ENCODE measurements at regions of chr10 and their contacts with region 1.

Region 1: DNA sequence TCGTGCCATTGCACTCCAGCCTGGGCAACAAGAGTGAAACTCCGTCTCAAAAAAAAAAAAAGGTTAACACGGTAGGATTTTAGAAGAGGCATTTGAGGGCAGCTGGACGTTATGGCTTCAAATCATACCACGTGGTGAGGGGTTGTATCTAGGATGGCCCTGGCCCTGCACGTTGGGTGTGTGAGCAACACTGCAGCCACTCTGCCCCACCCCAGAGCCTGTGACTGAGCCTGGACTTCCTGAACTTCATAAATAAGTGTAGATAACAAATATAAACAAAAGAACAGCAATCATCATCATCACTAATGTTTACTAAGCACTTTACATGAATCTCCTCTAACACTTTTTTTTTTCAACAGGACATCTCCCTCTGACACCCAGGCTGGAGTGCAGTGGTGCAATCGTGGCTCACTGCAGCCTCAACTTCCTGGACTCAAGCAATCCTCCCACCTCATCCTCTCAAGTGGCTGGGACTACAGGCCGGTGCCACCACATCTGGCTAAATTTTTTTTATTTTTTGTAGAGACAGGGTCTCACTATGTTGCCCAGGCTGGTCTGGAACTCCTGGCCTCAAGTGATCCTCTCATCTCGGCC is 169.5 kb upstream of the FRMD4A start:
- DNase-seq: no peak
- ATAC-seq: no peak
- H3K4me3 ChIP-seq: no peak overlapping the region
- H3K4me3 Mint-ChIP-seq: no peak overlapping the region
- H3K27ac ChIP-seq: no peak overlapping the region
- H3K27ac Mint-ChIP-seq: peak overlapping the region in 4 of 9 donors; percentile 28 to 56 (median 40)
- H3K4me1 ChIP-seq: no peaks in the 10 kb centered on the region
- H3K4me1 Mint-ChIP-seq: peaks cover 4 to 15% (median 6%) of the 10 kb centered on the region in 7 donors
- H3K27me3 ChIP-seq: no peaks in the 10 kb centered on the region
- H3K27me3 Mint-ChIP-seq: peaks cover 0 to 12% (median 0%) of the 10 kb centered on the region in 5 donors

Region 2: DNA sequence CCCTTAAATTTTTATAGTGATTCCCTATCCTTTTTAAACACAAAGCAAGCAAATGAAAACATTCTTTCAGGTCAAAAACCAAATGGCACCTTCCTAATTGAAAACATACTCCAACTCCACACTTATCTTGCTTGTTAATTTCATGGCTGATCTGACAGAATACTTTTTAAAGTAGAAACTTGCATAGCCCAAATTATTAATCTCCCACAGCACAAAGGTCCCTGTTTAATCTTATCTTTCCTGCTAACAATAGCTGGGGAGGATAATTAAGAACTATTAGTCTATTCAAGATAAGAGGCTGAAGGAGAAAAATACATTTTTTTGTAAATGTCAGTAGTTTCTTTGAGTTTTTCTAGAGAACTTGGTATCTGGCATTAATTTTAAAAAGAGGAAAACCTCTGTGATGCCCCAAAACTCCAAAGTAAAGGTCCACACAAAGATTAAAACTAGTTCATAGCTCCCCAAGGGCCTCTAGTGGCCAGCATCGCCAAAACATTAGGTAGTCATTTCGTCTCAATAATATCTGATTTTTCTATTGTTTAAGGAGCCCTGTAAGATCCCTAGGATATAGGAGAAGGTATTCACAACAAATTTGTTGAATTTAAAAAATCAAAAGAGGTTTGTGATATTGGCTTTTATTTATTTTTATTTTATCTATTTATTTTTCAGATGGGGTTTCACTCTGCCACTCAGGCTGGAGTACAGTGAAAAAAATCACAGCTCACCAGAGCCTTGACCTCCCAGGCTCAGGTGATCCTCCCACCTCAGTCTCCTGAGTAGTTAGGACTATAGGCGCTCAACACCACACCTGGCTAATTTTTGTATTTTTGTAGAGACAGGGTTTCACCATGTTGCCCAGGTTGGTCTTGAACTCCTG is 322.8 kb after region 1 on chr10:
- CTCF ChIA-PET with region 1: interaction called, 24 read pairs
- POLR2A ChIA-PET with region 1: no interaction called
- intact Hi-C with region 1: loop called (anchors 1 kb)
- DNase-seq: peak in 6 of 9 donors; percentile 14 to 54 (median 38)
- ATAC-seq: peak; percentile 64
- H3K4me3 ChIP-seq: no peak overlapping the region
- H3K4me3 Mint-ChIP-seq: no peak overlapping the region
- H3K27ac ChIP-seq: no peak overlapping the region
- H3K27ac Mint-ChIP-seq: peak overlapping the region in 4 of 9 donors; percentile 5 to 14 (median 10)
- H3K4me1 ChIP-seq: no peaks in the 10 kb centered on the region
- H3K4me1 Mint-ChIP-seq: peaks cover 0 to 15% (median 3%) of the 10 kb centered on the region in 7 donors
- H3K27me3 ChIP-seq: no peaks in the 10 kb centered on the region
- H3K27me3 Mint-ChIP-seq: peaks cover 0 to 10% (median 0%) of the 10 kb centered on the region in 5 donors

Region 3: GRCh38 chr10:14904316-14904732 is 404.1 kb after region 1 on chr10:
- CTCF ChIA-PET with region 1: no interaction called
- POLR2A ChIA-PET with region 1: no interaction called
- intact Hi-C with region 1: loop called in 1 of 2 experiments (anchors 1 kb)
- DNase-seq: peak in 7 of 9 donors; percentile 11 to 57 (median 41)
- ATAC-seq: peak; percentile 81
- H3K4me3 ChIP-seq: no peak overlapping the region
- H3K4me3 Mint-ChIP-seq: no peak overlapping the region
- H3K27ac ChIP-seq: no peak overlapping the region
- H3K27ac Mint-ChIP-seq: peak overlapping the region in 3 of 9 donors; percentile 48 to 73 (median 62)
- H3K4me1 ChIP-seq: peaks cover 0 to 4% of the 10 kb centered on the region in 2 donors
- H3K4me1 Mint-ChIP-seq: peaks cover 0 to 22% (median 11%) of the 10 kb centered on the region in 7 donors
- H3K27me3 ChIP-seq: no peaks in the 10 kb centered on the region
- H3K27me3 Mint-ChIP-seq: no peaks in the 10 kb centered on the region

Region 4: GRCh38 chr10:14954001-14954770 is 453.9 kb after region 1 on chr10 and contains the start of gene DCLRE1C:
- CTCF ChIA-PET with region 1: no interaction called
- POLR2A ChIA-PET with region 1: no interaction called
- intact Hi-C with region 1: loop called (anchors 1 to 5 kb)
- DNase-seq: peak; percentile 70 to 89 (median 87)
- ATAC-seq: peak; percentile 90
- H3K4me3 ChIP-seq: peak within 1 kb of the TSS; percentile 97
- H3K4me3 Mint-ChIP-seq: peak within 1 kb of the TSS; percentile 89 to 96 (median 92)
- H3K27ac ChIP-seq: peak within 1 kb of the TSS; percentile 78
- H3K27ac Mint-ChIP-seq: peak within 1 kb of the TSS; percentile 91 to 97 (median 96)
- H3K4me1 ChIP-seq: peaks cover 29 to 32% of the 10 kb centered on the region in 2 donors
- H3K4me1 Mint-ChIP-seq: peaks cover 29 to 69% (median 65%) of the 10 kb centered on the region in 7 donors
- H3K27me3 ChIP-seq: no peaks in the 10 kb centered on the region
- H3K27me3 Mint-ChIP-seq: no peaks in the 10 kb centered on the region
- total RNA-seq, gene DCLRE1C: 16.4 to 38.7 (median 24.2) TPM

Region 5: GRCh38 chr10:14971867-14972448 is 471.7 kb after region 1 on chr10:
- CTCF ChIA-PET with region 1: interaction called, 4 read pairs
- POLR2A ChIA-PET with region 1: no interaction called
- intact Hi-C with region 1: loop called (anchors 1 to 5 kb)
- DNase-seq: peak in 8 of 9 donors; percentile 16 to 62 (median 48)
- ATAC-seq: peak; percentile 73
- H3K4me3 ChIP-seq: no peak overlapping the region
- H3K4me3 Mint-ChIP-seq: no peak overlapping the region
- H3K27ac ChIP-seq: no peak overlapping the region
- H3K27ac Mint-ChIP-seq: no peak overlapping the region
- H3K4me1 ChIP-seq: no peaks in the 10 kb centered on the region
- H3K4me1 Mint-ChIP-seq: peaks cover 0 to 6% (median 5%) of the 10 kb centered on the region in 7 donors
- H3K27me3 ChIP-seq: peaks cover 0 to 4% of the 10 kb centered on the region in 2 donors
- H3K27me3 Mint-ChIP-seq: peaks cover 8 to 28% (median 25%) of the 10 kb centered on the region in 5 donors

Region 6: GRCh38 chr10:15106352-15107013 is 606.2 kb after region 1 on chr10:
- CTCF ChIA-PET with region 1: no interaction called
- POLR2A ChIA-PET with region 1: no interaction called
- intact Hi-C with region 1: loop called in 1 of 2 experiments (anchors 1 kb)
- DNase-seq: peak; percentile 41 to 67 (median 58)
- ATAC-seq: peak; percentile 99
- H3K4me3 ChIP-seq: no peak overlapping the region
- H3K4me3 Mint-ChIP-seq: no peak overlapping the region
- H3K27ac ChIP-seq: peak overlapping the region; percentile 9
- H3K27ac Mint-ChIP-seq: peak overlapping the region; percentile 26 to 88 (median 68)
- H3K4me1 ChIP-seq: no peaks in the 10 kb centered on the region
- H3K4me1 Mint-ChIP-seq: peaks cover 3 to 9% (median 5%) of the 10 kb centered on the region in 7 donors
- H3K27me3 ChIP-seq: no peaks in the 10 kb centered on the region
- H3K27me3 Mint-ChIP-seq: no peaks in the 10 kb centered on the region

Measured in naive thymus-derived CD4-positive, alpha-beta T cell (primary cell).